T-cell (primary cell): ENCODE measurements at regions of chr2 and their contacts with region 1.

Region 1: DNA sequence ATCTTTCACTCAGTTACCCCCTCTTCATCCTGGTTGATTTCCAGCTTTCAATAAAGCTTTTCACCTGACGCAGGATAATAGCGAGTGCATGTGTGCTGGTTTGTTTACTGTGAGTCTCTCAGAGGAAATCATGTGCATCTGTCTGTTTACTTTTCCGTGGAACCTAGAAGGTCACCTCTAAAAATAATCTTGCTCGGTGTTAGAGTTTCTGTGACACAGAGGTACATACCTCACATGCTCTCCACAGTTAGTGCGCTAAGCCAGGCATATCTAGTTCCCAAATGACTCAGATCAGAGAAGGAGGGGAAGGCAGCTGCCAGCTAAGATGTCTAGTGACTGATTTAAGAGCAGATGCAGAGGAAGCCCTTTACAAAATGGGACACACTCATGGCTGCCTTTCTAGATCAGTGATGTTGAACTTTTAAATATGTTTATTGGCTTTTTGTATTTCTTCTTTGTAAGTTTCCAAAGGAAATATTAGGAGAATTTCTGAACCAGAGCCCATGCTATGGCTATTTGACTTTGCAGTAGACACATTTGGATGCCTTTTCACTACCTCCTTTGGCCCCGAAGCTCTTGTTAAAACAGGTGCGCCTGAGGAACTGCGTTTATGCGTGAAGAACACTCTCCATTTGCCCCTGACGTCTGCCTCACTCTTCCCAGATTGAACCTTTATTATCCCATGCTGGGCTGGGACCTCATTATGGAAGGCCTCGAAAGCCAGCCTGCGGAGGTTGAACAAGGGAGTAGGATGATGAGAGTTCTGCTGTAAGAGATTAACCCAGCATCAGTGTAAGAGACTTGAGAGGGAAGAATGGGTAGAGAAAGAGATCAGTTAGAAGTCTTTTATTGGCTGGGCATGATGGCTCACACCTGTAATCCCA is 145.6 kb downstream of the FAM161A start:
- DNase-seq: no peak
- ATAC-seq: no peak
- H3K4me3 ChIP-seq: no peak overlapping the region
- H3K4me3 Mint-ChIP-seq: no peak overlapping the region
- H3K27ac ChIP-seq: no peak overlapping the region
- H3K27ac Mint-ChIP-seq: no peak overlapping the region
- H3K4me1 ChIP-seq: no peaks in the 10 kb centered on the region
- H3K4me1 Mint-ChIP-seq: peaks cover 0 to 2% (median 0%) of the 10 kb centered on the region in 3 donors
- H3K27me3 ChIP-seq: no peaks in the 10 kb centered on the region
- H3K27me3 Mint-ChIP-seq: no peaks in the 10 kb centered on the region

Region 2: GRCh38 chr2:61233581-61233980 is 474.6 kb before region 1 on chr2:
- CTCF ChIA-PET with region 1: no interaction called
- POLR2A ChIA-PET with region 1: interaction called in 1 of 2 experiments, 13 read pairs
- DNase-seq: no peak
- ATAC-seq: no peak
- H3K4me3 ChIP-seq: no peak overlapping the region
- H3K4me3 Mint-ChIP-seq: no peak overlapping the region
- H3K27ac ChIP-seq: no peak overlapping the region
- H3K27ac Mint-ChIP-seq: no peak overlapping the region
- H3K4me1 ChIP-seq: peaks cover 3 to 8% of the 10 kb centered on the region in 2 experiments
- H3K4me1 Mint-ChIP-seq: peaks cover 4 to 9% (median 5%) of the 10 kb centered on the region in 3 donors
- H3K27me3 ChIP-seq: no peaks in the 10 kb centered on the region
- H3K27me3 Mint-ChIP-seq: no peaks in the 10 kb centered on the region